CD8-positive, alpha-beta T cell (primary cell): ENCODE measurements at regions of chr10 and their contacts with region 1.

Region 1: DNA sequence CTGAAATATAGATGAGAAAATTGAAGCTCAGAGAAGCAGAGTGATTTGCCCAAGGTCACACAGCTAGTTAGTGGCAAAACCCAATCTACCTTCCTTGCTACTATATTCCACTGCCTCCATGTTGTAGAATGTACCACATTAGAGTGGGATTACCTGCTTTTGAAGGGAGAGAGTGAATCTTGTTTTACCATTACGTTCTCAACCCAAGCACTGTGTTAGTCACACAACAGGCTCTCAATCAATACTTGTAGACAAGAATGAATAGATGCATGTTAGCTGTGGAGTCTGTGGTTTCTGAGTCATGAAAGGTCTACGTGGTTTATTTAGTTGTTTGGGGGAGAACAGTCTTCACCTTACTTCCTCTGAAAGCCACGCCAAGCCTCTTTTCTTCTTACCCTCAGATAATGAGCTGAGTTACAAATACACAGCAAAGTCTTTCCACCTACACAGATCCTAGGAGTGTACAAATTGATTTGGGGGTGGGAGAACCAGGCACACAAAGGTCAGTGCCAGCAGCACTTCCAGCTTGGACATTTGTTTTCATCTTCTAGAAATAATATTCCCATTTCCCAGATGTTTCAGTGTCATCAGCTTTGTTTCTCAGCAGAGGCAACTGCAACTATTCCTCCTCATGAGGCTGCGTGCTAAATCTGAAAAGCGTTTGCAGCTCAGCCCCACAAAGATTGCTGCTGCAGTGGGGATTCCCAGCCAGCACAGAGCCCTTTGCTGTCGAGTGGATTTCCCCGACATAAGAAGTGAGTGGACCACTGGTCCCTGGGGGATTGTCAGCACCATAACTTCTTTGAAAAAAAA is 71.5 kb upstream of the ADO start:
- DNase-seq: peak in 8 of 9 experiments; percentile 33 to 92 (median 64)
- ATAC-seq: peak; percentile 88
- H3K4me3 ChIP-seq: peak overlapping the region in 1 of 2 experiments; percentile 10
- H3K4me3 Mint-ChIP-seq: peak overlapping the region; percentile 1
- H3K27ac ChIP-seq: peak overlapping the region in 1 of 2 experiments; percentile 17
- H3K27ac Mint-ChIP-seq: no peak overlapping the region
- H3K4me1 ChIP-seq: peaks cover 35% of the 10 kb centered on the region
- H3K4me1 Mint-ChIP-seq: peaks cover 6% of the 10 kb centered on the region
- H3K27me3 ChIP-seq: peaks cover 0 to 2% of the 10 kb centered on the region in 2 experiments
- H3K27me3 Mint-ChIP-seq: peaks cover 2% of the 10 kb centered on the region
- CTCF ChIP-seq: no peak

Region 2: GRCh38 chr10:61869774-61870525 is 863.1 kb before region 1 on chr10:
- CTCF ChIA-PET with region 1: no interaction called
- POLR2A ChIA-PET with region 1: no interaction called
- intact Hi-C with region 1: no loop called
- DNase-seq: no peak
- ATAC-seq: no peak
- H3K4me3 ChIP-seq: no peak overlapping the region
- H3K4me3 Mint-ChIP-seq: no peak overlapping the region
- H3K27ac ChIP-seq: no peak overlapping the region
- H3K27ac Mint-ChIP-seq: no peak overlapping the region
- H3K4me1 ChIP-seq: no peaks in the 10 kb centered on the region
- H3K4me1 Mint-ChIP-seq: peaks cover 7% of the 10 kb centered on the region
- H3K27me3 ChIP-seq: no peaks in the 10 kb centered on the region
- H3K27me3 Mint-ChIP-seq: peaks cover 2% of the 10 kb centered on the region
- CTCF ChIP-seq: no peak

Region 3: DNA sequence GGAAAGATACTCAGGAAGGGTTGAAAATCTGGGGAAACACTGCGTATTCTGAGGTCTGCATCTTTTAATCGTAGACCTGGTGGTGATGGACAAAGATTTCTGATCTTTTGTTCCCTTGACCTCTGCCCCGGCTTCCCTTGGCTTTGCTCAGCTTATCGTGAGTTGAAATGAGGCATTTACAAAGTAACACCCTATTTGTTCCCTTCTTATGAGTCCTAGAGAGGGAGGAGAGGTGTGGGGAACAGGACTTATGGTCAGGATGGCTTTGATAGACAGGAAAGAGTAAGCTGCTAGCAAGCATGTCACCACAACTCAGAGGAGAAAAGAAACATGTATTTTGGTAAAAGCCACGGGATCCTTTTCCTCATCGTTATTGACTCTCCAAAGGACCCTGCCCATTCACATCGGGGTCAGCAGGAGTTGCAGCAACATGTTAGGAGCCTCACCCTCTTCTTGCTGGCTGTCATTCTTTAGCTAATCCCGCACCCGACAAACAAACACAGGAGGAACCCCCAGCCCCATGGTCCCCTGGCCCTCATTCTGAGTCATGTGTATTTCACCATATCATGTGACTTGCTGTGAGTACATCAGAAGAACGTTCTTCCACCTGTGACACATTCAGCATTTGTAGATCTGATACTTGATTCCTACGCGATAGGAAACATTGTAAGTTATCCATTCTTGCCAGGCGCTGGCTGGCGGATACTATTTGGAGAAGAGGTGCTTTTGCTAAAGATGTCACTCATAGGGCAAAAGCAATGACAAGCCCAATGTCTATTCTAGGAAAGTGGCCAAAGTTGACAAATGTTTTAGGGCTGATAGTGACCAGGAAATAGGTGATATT is 634.5 kb before region 1 on chr10:
- CTCF ChIA-PET with region 1: no interaction called
- POLR2A ChIA-PET with region 1: no interaction called
- intact Hi-C with region 1: no loop called
- DNase-seq: no peak
- ATAC-seq: no peak
- H3K4me3 ChIP-seq: no peak overlapping the region
- H3K4me3 Mint-ChIP-seq: no peak overlapping the region
- H3K27ac ChIP-seq: no peak overlapping the region
- H3K27ac Mint-ChIP-seq: no peak overlapping the region
- H3K4me1 ChIP-seq: no peaks in the 10 kb centered on the region
- H3K4me1 Mint-ChIP-seq: peaks cover 2% of the 10 kb centered on the region
- H3K27me3 ChIP-seq: no peaks in the 10 kb centered on the region
- H3K27me3 Mint-ChIP-seq: no peaks in the 10 kb centered on the region
- CTCF ChIP-seq: no peak

Region 4: DNA sequence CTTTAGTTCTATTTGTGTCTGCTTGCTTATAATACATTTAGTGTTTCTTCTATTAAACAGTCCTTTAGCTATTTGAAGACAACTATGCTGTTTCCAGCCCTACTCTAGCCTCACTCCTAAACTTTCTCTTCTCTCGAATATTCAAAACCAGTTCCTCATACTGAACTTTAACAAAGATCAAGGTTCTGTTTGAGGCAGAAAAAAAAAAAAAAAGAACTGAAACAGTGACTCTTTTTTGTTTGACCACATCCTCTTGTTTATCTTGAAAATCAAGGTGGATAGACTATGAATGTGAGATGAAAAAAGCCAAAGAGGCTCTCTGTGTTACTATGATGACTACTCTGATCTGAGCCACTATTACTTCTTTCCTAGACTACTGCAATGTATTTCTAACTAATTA is 204.6 kb before region 1 on chr10:
- CTCF ChIA-PET with region 1: no interaction called
- POLR2A ChIA-PET with region 1: no interaction called
- intact Hi-C with region 1: loop called in 1 of 2 experiments (anchors 2 kb)
- DNase-seq: peak in 2 of 9 experiments; percentile 57 to 75
- ATAC-seq: peak; percentile 88
- H3K4me3 ChIP-seq: peak overlapping the region in 1 of 2 experiments; percentile 14
- H3K4me3 Mint-ChIP-seq: peak overlapping the region; percentile 40
- H3K27ac ChIP-seq: no peak overlapping the region
- H3K27ac Mint-ChIP-seq: peak overlapping the region; percentile 70
- H3K4me1 ChIP-seq: peaks cover 43% of the 10 kb centered on the region
- H3K4me1 Mint-ChIP-seq: peaks cover 44% of the 10 kb centered on the region
- H3K27me3 ChIP-seq: no peaks in the 10 kb centered on the region
- H3K27me3 Mint-ChIP-seq: no peaks in the 10 kb centered on the region
- CTCF ChIP-seq: no peak

Region 5: DNA sequence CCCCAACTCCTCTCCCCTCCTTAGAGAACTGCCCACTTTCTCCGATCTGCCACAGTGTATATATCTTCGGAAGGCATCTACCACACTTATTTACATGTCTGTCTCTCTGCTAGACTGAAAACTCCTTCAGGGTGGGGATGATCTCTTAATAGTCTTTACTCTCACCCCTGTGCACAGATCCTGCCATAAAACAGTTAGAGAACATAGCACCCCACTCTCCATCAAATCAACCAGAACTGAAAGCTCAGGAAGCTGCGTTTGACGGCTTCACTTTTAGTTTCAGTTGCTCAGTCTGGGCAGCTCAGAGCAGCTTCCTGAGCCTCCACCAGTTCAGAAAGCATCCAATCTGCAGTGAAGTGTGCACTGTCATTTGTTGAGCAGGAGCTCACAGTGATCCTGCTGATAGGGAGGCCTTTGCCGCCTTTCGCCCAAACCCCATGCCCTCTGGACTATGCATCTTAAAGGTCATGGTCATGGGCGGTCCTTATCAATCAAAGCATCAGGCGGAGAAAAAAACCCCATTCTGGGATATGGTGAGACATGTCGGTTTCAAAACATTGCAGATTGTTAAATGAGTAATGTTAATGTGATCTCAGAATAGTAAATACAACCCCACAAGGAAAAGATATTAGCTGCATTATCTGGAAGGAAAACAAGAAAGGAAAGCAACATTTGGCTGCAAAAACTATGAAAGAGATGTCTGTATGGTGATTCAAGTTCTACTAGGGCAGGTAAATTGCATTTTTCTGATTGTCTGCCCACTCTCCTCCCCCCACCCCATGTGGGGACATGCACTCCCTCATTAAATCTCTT is 95.6 kb before region 1 on chr10:
- CTCF ChIA-PET with region 1: interaction called, 3 read pairs
- POLR2A ChIA-PET with region 1: interaction called, 8 read pairs
- intact Hi-C with region 1: loop called (anchors 2 to 5 kb)
- DNase-seq: peak; percentile 25 to 90 (median 68)
- ATAC-seq: peak; percentile 84
- H3K4me3 ChIP-seq: peak overlapping the region; percentile 48
- H3K4me3 Mint-ChIP-seq: no peak overlapping the region
- H3K27ac ChIP-seq: peak overlapping the region; percentile 77 to 88
- H3K27ac Mint-ChIP-seq: no peak overlapping the region
- H3K4me1 ChIP-seq: peaks cover 28% of the 10 kb centered on the region
- H3K4me1 Mint-ChIP-seq: peaks cover 14% of the 10 kb centered on the region
- H3K27me3 ChIP-seq: no peaks in the 10 kb centered on the region
- H3K27me3 Mint-ChIP-seq: no peaks in the 10 kb centered on the region
- CTCF ChIP-seq: no peak

Region 6: DNA sequence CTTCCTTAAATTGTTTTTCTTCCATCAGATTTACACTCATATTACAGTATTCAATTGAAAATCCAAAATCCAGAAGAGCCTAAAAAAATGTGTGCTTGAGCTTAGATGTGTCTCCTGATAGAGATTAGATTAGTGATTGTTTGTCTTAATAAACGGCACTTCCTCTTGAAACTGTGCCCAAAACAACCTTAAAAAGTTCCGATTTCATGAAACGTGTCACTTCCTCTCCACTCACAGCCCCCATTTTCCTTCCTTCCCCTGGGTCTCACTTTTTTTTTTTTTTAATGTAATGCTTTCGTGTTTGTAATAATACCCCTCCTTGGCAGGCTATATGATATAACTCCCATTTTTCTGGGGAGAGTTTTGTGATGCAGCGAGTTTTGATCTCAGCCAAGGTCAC is 43.3 kb before region 1 on chr10:
- CTCF ChIA-PET with region 1: no interaction called
- POLR2A ChIA-PET with region 1: no interaction called
- intact Hi-C with region 1: loop called (anchors 5 kb)
- DNase-seq: peak in 2 of 9 experiments; percentile 62 to 83
- ATAC-seq: peak; percentile 44
- H3K4me3 ChIP-seq: peak overlapping the region in 1 of 2 experiments; percentile 21
- H3K4me3 Mint-ChIP-seq: peak overlapping the region; percentile 60
- H3K27ac ChIP-seq: peak overlapping the region in 1 of 2 experiments; percentile 81
- H3K27ac Mint-ChIP-seq: peak overlapping the region; percentile 82
- H3K4me1 ChIP-seq: peaks cover 31% of the 10 kb centered on the region
- H3K4me1 Mint-ChIP-seq: peaks cover 46% of the 10 kb centered on the region
- H3K27me3 ChIP-seq: no peaks in the 10 kb centered on the region
- H3K27me3 Mint-ChIP-seq: no peaks in the 10 kb centered on the region
- CTCF ChIP-seq: no peak

Region 7: GRCh38 chr10:62779487-62780248 is 46.6 kb after region 1 on chr10:
- CTCF ChIA-PET with region 1: interaction called, 7 read pairs
- POLR2A ChIA-PET with region 1: interaction called, 6 read pairs
- intact Hi-C with region 1: loop called (anchors 1 to 2 kb)
- DNase-seq: peak; percentile 63 to 97 (median 84)
- ATAC-seq: peak; percentile 96
- H3K4me3 ChIP-seq: no peak overlapping the region
- H3K4me3 Mint-ChIP-seq: peak overlapping the region; percentile 12
- H3K27ac ChIP-seq: no peak overlapping the region
- H3K27ac Mint-ChIP-seq: peak overlapping the region; percentile 81
- H3K4me1 ChIP-seq: peaks cover 12% of the 10 kb centered on the region
- H3K4me1 Mint-ChIP-seq: peaks cover 18% of the 10 kb centered on the region
- H3K27me3 ChIP-seq: no peaks in the 10 kb centered on the region
- H3K27me3 Mint-ChIP-seq: no peaks in the 10 kb centered on the region
- CTCF ChIP-seq: no peak

Region 8: DNA sequence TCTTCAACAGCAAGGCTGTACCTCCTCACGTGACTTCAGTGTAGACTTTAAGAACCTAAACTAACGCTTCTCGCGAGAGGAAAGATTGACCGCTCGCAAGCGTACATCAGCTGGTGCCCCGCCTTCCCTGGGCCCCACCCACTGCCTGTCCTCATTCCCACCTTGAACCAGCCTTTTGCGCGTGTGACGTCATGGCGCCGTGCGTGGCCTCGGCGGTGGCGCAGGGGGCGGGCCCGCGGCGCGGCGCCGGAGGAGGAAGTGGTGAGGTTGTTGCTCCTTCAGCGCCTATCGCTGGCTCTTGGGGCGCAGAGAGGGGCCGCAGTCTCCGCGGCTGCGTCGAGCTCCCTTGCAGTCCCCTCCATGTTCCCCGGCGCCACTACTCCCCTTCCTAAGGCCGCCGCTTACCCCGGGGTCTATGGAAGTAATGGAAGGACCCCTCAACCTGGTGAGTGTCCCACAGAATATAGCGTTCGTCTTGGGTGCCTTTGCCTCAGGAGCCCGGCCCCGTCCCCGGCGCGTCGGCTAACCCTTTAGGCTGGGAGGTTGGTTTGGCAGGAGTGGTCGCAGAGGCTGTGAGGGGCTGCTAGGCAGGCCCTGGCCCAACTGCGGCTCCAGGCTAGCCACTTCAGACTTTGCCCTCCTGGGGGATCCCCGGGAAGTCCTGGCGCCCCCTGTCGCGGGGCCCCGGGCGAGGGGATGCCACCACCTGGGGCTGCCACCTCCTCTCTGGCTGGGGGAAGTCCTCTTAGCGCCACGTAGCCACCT is 400.2 kb after region 1 on chr10 and contains the start of gene NRBF2:
- CTCF ChIA-PET with region 1: no interaction called
- POLR2A ChIA-PET with region 1: interaction called, 3 read pairs
- intact Hi-C with region 1: loop called (anchors 1 to 2 kb)
- DNase-seq: peak; percentile 94 to 99 (median 97)
- ATAC-seq: peak; percentile 91
- H3K4me3 ChIP-seq: peak within 1 kb of the TSS; percentile 96 to 97
- H3K4me3 Mint-ChIP-seq: peak within 1 kb of the TSS; percentile 91
- H3K27ac ChIP-seq: peak within 1 kb of the TSS; percentile 96 to 98
- H3K27ac Mint-ChIP-seq: peak within 1 kb of the TSS; percentile 97
- H3K4me1 ChIP-seq: peaks cover 41% of the 10 kb centered on the region
- H3K4me1 Mint-ChIP-seq: peaks cover 37% of the 10 kb centered on the region
- H3K27me3 ChIP-seq: no peaks in the 10 kb centered on the region
- H3K27me3 Mint-ChIP-seq: peaks cover 5% of the 10 kb centered on the region
- CTCF ChIP-seq: peak; percentile 22
- total RNA-seq, gene NRBF2: 26.6 to 29.1 TPM

Region 9: DNA sequence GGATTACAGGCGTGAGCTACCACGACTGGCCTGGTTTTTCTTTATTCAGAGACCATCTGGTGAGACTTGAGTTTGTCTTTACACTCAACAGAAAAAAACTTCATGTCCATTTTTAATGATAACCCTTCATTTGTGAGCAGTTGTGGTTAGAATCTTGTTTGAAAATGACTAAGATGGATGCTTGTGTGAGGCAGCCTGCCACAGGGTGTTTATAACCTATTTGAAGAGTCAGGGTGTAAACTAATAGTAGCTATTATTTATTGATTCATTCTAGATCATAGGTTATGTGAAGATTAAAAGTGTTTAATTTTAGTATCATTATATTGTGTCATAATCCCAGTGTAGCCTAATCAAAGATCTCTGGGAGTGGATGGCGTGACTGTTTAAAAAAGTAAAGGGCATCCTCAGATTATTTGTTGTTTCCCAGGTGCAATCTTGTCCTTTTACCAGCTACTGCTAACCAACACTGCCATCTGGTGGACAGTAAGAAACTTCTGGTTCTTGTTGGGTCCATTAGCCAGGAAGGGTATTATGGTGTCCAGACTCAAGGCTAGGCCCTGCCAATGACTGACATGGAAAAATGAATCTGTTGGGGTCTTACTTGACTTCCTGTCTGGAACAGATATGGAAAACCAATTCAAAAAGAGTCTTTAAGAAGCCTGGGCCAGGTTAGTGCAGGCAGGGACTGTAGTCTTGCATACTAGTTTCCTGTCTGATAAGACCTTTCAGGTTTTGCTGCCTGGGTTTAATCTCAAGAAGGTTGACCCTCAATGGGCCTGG is 425.0 kb after region 1 on chr10:
- CTCF ChIA-PET with region 1: no interaction called
- POLR2A ChIA-PET with region 1: no interaction called
- intact Hi-C with region 1: no loop called
- DNase-seq: peak in 8 of 9 experiments; percentile 13 to 88 (median 48)
- ATAC-seq: peak; percentile 74
- H3K4me3 ChIP-seq: no peak overlapping the region
- H3K4me3 Mint-ChIP-seq: no peak overlapping the region
- H3K27ac ChIP-seq: no peak overlapping the region
- H3K27ac Mint-ChIP-seq: no peak overlapping the region
- H3K4me1 ChIP-seq: no peaks in the 10 kb centered on the region
- H3K4me1 Mint-ChIP-seq: peaks cover 11% of the 10 kb centered on the region
- H3K27me3 ChIP-seq: no peaks in the 10 kb centered on the region
- H3K27me3 Mint-ChIP-seq: no peaks in the 10 kb centered on the region
- CTCF ChIP-seq: peak; percentile 79